CD8-positive, alpha-beta memory T cell (primary cell): ENCODE measurements at regions of chr4 and their contacts with region 1.

Region 1: GRCh38 chr4:99088481-99089365 is at the start of gene ADH5:
- DNase-seq: peak; percentile 83 to 94 (median 85)
- H3K4me3 ChIP-seq: peak within 1 kb of the TSS; percentile 97
- H3K4me3 Mint-ChIP-seq: peak within 1 kb of the TSS; percentile 96 to 99 (median 97)
- H3K27ac ChIP-seq: peak within 1 kb of the TSS; percentile 85
- H3K27ac Mint-ChIP-seq: peak within 1 kb of the TSS; percentile 94 to 99 (median 97)
- H3K4me1 ChIP-seq: peaks cover 15% of the 10 kb centered on the region
- H3K4me1 Mint-ChIP-seq: peaks cover 49 to 64% (median 58%) of the 10 kb centered on the region in 3 donors
- H3K27me3 ChIP-seq: no peaks in the 10 kb centered on the region
- H3K27me3 Mint-ChIP-seq: no peaks in the 10 kb centered on the region
- total RNA-seq, gene ADH5: 113 to 116 TPM

Region 2: DNA sequence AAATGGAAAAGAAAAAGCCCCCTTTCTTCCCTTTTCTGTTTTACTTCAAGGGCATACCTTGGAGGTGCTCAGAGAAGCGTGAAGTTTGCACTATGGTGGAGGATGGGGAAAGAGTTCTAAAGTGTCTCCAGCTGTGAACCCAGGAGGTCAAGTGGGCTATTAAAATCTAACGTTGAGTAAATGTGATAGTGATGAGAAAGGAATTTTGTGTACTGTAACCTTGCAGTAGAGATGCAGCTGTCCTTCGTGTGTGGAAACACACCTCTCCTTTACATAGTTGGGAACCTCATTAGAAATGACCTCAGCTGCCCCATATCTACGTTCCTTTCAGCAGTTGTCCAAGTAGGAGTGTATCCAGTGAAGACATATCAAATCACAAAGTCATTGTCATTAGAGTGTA is 26.6 kb before region 1 on chr4:
- CTCF ChIA-PET with region 1: no interaction called
- POLR2A ChIA-PET with region 1: interaction called, 12 read pairs
- DNase-seq: no peak
- H3K4me3 ChIP-seq: no peak overlapping the region
- H3K4me3 Mint-ChIP-seq: no peak overlapping the region
- H3K27ac ChIP-seq: no peak overlapping the region
- H3K27ac Mint-ChIP-seq: peak overlapping the region in 1 of 8 donors; percentile 32
- H3K4me1 ChIP-seq: no peaks in the 10 kb centered on the region
- H3K4me1 Mint-ChIP-seq: no peaks in the 10 kb centered on the region
- H3K27me3 ChIP-seq: no peaks in the 10 kb centered on the region
- H3K27me3 Mint-ChIP-seq: no peaks in the 10 kb centered on the region